ENCODE measurements at regions of chr19 and their contacts with region 1.

Region 1: GRCh38 chr19:2602391-2603181 is 99.9 kb downstream of the GNG7 start:
- DNase-seq: no peak
- ATAC-seq: no peak
- H3K4me3 ChIP-seq: no peak overlapping the region
- H3K27ac ChIP-seq: no peak overlapping the region
- H3K4me1 ChIP-seq: peaks cover 13% of the 10 kb centered on the region; the same call in 1 of the 2 replicates
- H3K27me3 ChIP-seq: no peaks in the 10 kb centered on the region
- CTCF ChIP-seq: no peak
- EP300 ChIP-seq: no peak
- POLR2A ChIP-seq: no peak
- RAD21 ChIP-seq: no peak

Region 2: GRCh38 chr19:2543463-2544442 is 58.8 kb before region 1 on chr19:
- CTCF ChIA-PET with region 1: no interaction called
- POLR2A ChIA-PET with region 1: interaction called, 10 read pairs
- RAD21 ChIA-PET with region 1: interaction called, 19 read pairs
- SMC1A ChIA-PET with region 1: interaction called, 3 read pairs
- in situ Hi-C with region 1: no loop called
- intact Hi-C with region 1: no loop called
- DNase-seq: no peak
- ATAC-seq: peak; percentile 82
- H3K4me3 ChIP-seq: peak overlapping the region; percentile 53
- H3K27ac ChIP-seq: peak overlapping the region; percentile 64
- H3K4me1 ChIP-seq: peaks cover 35% of the 10 kb centered on the region
- H3K27me3 ChIP-seq: no peaks in the 10 kb centered on the region
- CTCF ChIP-seq: peak in 1 of 3 experiments; percentile 18; a peak in 1 of 6 replicates
- EP300 ChIP-seq: no peak
- POLR2A ChIP-seq: peak; percentile 41; the same call in 1 of the 2 replicates
- RAD21 ChIP-seq: 0 out of 2 replicates have a peak, but pooled peaks have one; percentile 3

Region 3: GRCh38 chr19:2552859-2553258 is 49.7 kb before region 1 on chr19:
- CTCF ChIA-PET with region 1: interaction called, 3 read pairs
- POLR2A ChIA-PET with region 1: interaction called, 10 read pairs
- RAD21 ChIA-PET with region 1: interaction called, 43 read pairs
- SMC1A ChIA-PET with region 1: no interaction called
- in situ Hi-C with region 1: no loop called
- intact Hi-C with region 1: no loop called
- DNase-seq: peak; percentile 86
- ATAC-seq: peak; percentile 94
- H3K4me3 ChIP-seq: peak overlapping the region; percentile 20; the same call in 1 of the 2 replicates
- H3K27ac ChIP-seq: peak overlapping the region; percentile 55
- H3K4me1 ChIP-seq: peaks cover 11% of the 10 kb centered on the region
- H3K27me3 ChIP-seq: no peaks in the 10 kb centered on the region
- CTCF ChIP-seq: no peak
- EP300 ChIP-seq: peak in 1 of 2 experiments; percentile 77; a peak in 1 of 4 replicates
- POLR2A ChIP-seq: no peak
- RAD21 ChIP-seq: 0 out of 2 replicates have a peak, but pooled peaks have one; percentile 5

Region 4: GRCh38 chr19:2578901-2579677 is 23.5 kb before region 1 on chr19:
- CTCF ChIA-PET with region 1: interaction called, 4 read pairs
- POLR2A ChIA-PET with region 1: interaction called, 3 read pairs
- RAD21 ChIA-PET with region 1: interaction called, 39 read pairs
- SMC1A ChIA-PET with region 1: interaction called, 12 read pairs
- in situ Hi-C with region 1: no loop called
- intact Hi-C with region 1: no loop called
- DNase-seq: no peak
- ATAC-seq: peak; percentile 90
- H3K4me3 ChIP-seq: no peak overlapping the region
- H3K27ac ChIP-seq: no peak overlapping the region
- H3K4me1 ChIP-seq: peaks cover 7% of the 10 kb centered on the region; the same call in 1 of the 2 replicates
- H3K27me3 ChIP-seq: no peaks in the 10 kb centered on the region
- CTCF ChIP-seq: peak; percentile 43 to 79 (median 72); a peak in 5 of 6 replicates
- EP300 ChIP-seq: no peak
- POLR2A ChIP-seq: no peak
- RAD21 ChIP-seq: peak; percentile 78

Region 5: GRCh38 chr19:2618611-2619010 is 16.0 kb after region 1 on chr19:
- CTCF ChIA-PET with region 1: interaction called, 121 read pairs
- POLR2A ChIA-PET with region 1: interaction called, 17 read pairs
- RAD21 ChIA-PET with region 1: interaction called, 14 read pairs
- SMC1A ChIA-PET with region 1: interaction called, 49 read pairs
- in situ Hi-C with region 1: no loop called
- intact Hi-C with region 1: no loop called
- DNase-seq: no peak
- ATAC-seq: no peak
- H3K4me3 ChIP-seq: no peak overlapping the region
- H3K27ac ChIP-seq: peak overlapping the region; percentile 68
- H3K4me1 ChIP-seq: peaks cover 62% of the 10 kb centered on the region
- H3K27me3 ChIP-seq: no peaks in the 10 kb centered on the region
- CTCF ChIP-seq: no peak
- EP300 ChIP-seq: 0 out of 4 replicates have a peak, but pooled peaks of 1 of the 2 experiments have one; percentile 24
- POLR2A ChIP-seq: no peak
- RAD21 ChIP-seq: no peak